HepG2 (cell line): ENCODE measurements at regions of chr2 and their contacts with region 1.

Region 1: GRCh38 chr2:176140513-176141317 is 10.6 kb upstream of the HOXD4 start:
- DNase-seq: peak; percentile 60
- ATAC-seq: peak; percentile 93
- H3K4me3 ChIP-seq: peak overlapping the region; percentile 44 to 75 (median 56)
- H3K27ac ChIP-seq: no peak overlapping the region
- H3K4me1 ChIP-seq: peaks cover 11% of the 10 kb centered on the region
- H3K27me3 ChIP-seq: peaks cover 5 to 87% of the 10 kb centered on the region in 2 experiments; a peak in 4 of 5 replicates
- CTCF ChIP-seq: peak; percentile 99
- EP300 ChIP-seq: no peak
- POLR2A ChIP-seq: no peak
- RAD21 ChIP-seq: peak; percentile 100

Region 2: DNA sequence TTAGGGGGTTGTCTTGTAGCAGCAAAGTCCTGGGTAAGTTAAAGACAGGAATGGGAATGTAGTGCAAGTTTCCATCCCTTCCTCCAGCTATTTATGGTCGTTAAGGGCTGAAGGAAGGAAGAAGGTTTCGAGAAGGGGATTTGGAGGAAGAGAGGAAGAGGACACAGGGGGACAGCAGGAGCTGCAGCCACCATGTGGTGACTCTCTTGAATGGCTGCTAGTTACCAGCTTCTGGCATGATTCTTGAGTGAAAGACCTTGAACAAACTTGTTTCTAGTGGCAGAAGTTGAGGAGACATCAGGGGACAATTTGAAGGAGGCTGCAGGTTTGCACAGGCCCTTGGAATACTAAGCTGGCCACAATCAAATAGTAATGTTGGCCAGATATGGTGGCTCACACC is 245.1 kb after region 1 on chr2:
- CTCF ChIA-PET with region 1: interaction called, 4 read pairs
- POLR2A ChIA-PET with region 1: no interaction called
- in situ Hi-C with region 1: no loop called
- intact Hi-C with region 1: loop called (anchors 1 kb)
- DNase-seq: peak; percentile 20
- ATAC-seq: peak; percentile 82
- H3K4me3 ChIP-seq: no peak overlapping the region
- H3K27ac ChIP-seq: no peak overlapping the region
- H3K4me1 ChIP-seq: peaks cover 6% of the 10 kb centered on the region; the same call in 1 of the 2 replicates
- H3K27me3 ChIP-seq: no peaks in the 10 kb centered on the region
- CTCF ChIP-seq: peak; percentile 46
- EP300 ChIP-seq: no peak
- POLR2A ChIP-seq: no peak
- RAD21 ChIP-seq: peak; percentile 53; the same call in 1 of the 2 replicates

Region 3: GRCh38 chr2:176454893-176455811 is 314.4 kb after region 1 on chr2:
- CTCF ChIA-PET with region 1: interaction called, 83 read pairs
- POLR2A ChIA-PET with region 1: interaction called, 3 read pairs
- in situ Hi-C with region 1: loop called (anchors 5 kb)
- intact Hi-C with region 1: loop called (anchors 1 kb)
- DNase-seq: peak; percentile 58
- ATAC-seq: peak; percentile 83
- H3K4me3 ChIP-seq: no peak overlapping the region
- H3K27ac ChIP-seq: no peak overlapping the region
- H3K4me1 ChIP-seq: no peaks in the 10 kb centered on the region
- H3K27me3 ChIP-seq: peaks cover 2 to 4% of the 10 kb centered on the region in 2 experiments; a peak in 1 of 5 replicates
- CTCF ChIP-seq: peak; percentile 83
- EP300 ChIP-seq: no peak
- POLR2A ChIP-seq: no peak
- RAD21 ChIP-seq: peak; percentile 82

Region 4: GRCh38 chr2:176554101-176555048 is 413.7 kb after region 1 on chr2:
- CTCF ChIA-PET with region 1: interaction called, 13 read pairs
- POLR2A ChIA-PET with region 1: no interaction called
- in situ Hi-C with region 1: no loop called
- intact Hi-C with region 1: loop called (anchors 1 kb)
- DNase-seq: peak; percentile 34
- ATAC-seq: peak; percentile 74
- H3K4me3 ChIP-seq: peak overlapping the region; percentile 6 to 39 (median 38)
- H3K27ac ChIP-seq: no peak overlapping the region
- H3K4me1 ChIP-seq: peaks cover 10% of the 10 kb centered on the region
- H3K27me3 ChIP-seq: peaks cover 0 to 19% of the 10 kb centered on the region in 2 experiments; a peak in 3 of 5 replicates
- CTCF ChIP-seq: peak; percentile 86
- EP300 ChIP-seq: no peak
- POLR2A ChIP-seq: no peak
- RAD21 ChIP-seq: 0 out of 2 replicates have a peak, but pooled peaks have one; percentile 28

Region 5: GRCh38 chr2:176638167-176639015 is 497.7 kb after region 1 on chr2:
- CTCF ChIA-PET with region 1: interaction called, 13 read pairs
- POLR2A ChIA-PET with region 1: no interaction called
- in situ Hi-C with region 1: no loop called
- intact Hi-C with region 1: loop called (anchors 5 kb)
- DNase-seq: peak; percentile 15
- ATAC-seq: peak; percentile 97
- H3K4me3 ChIP-seq: peak overlapping the region; percentile 39 to 68 (median 50)
- H3K27ac ChIP-seq: no peak overlapping the region
- H3K4me1 ChIP-seq: peaks cover 11% of the 10 kb centered on the region; the same call in 1 of the 2 replicates
- H3K27me3 ChIP-seq: peaks cover 6 to 59% of the 10 kb centered on the region in 2 experiments
- CTCF ChIP-seq: peak; percentile 75
- EP300 ChIP-seq: no peak
- POLR2A ChIP-seq: no peak
- RAD21 ChIP-seq: peak; percentile 84